RWPE1 (cell line): ENCODE measurements at regions of chr16 and their contacts with region 1.

Region 1: GRCh38 chr16:57462209-57462977 is at the start of gene POLR2C:
- DNase-seq: peak; percentile 81
- H3K27ac ChIP-seq: peak within 1 kb of the TSS; percentile 71
- CTCF ChIP-seq: peak; percentile 97

Region 2: DNA sequence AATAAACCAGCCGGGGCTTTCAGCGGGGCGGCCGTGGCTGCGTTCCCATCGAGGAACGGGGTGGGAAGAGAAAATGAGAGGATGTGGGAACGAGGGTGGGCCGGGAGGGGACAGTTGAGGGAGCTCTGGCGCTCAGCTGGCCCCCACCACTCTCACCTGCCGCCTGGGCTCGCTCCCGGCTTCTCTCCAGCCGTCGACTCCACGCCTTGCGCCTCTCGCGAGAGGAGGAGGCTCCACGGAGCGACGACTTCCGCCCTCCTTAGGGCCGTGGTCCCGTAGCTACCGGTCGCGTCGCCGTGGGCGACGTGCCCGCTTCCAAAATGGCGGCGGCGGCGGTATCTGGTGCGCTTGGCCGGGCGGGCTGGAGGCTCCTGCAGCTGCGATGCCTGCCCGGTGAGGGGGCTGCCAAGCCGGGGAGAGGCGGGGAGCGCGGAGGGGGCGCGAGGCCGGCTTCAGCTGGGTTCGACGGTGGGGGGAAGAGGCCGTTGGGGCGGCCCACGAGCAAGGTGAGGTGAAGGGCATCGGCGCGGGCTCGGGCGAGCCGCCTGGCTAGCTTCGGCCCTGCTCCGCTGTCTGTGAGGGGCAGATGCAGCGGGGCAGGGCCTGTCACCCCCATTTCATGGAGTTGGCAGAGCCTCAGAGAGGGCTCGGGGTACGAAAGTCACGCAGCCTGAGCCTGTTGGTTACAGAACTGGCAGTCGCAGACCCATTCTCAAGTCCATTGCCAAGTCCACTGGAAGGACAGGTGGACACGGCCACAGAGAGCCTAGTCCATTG is 15.0 kb before region 1 on chr16 and contains the starts of genes CIAPIN1 and COQ9:
- CTCF ChIA-PET with region 1: interaction called, 14 read pairs
- POLR2A ChIA-PET with region 1: interaction called, 4 read pairs
- DNase-seq: peak; percentile 93
- H3K27ac ChIP-seq: peak within 1 kb of the TSS; percentile 84
- CTCF ChIP-seq: no peak